ENCODE measurements at regions of chr1 and their contacts with region 1.

Region 1: DNA sequence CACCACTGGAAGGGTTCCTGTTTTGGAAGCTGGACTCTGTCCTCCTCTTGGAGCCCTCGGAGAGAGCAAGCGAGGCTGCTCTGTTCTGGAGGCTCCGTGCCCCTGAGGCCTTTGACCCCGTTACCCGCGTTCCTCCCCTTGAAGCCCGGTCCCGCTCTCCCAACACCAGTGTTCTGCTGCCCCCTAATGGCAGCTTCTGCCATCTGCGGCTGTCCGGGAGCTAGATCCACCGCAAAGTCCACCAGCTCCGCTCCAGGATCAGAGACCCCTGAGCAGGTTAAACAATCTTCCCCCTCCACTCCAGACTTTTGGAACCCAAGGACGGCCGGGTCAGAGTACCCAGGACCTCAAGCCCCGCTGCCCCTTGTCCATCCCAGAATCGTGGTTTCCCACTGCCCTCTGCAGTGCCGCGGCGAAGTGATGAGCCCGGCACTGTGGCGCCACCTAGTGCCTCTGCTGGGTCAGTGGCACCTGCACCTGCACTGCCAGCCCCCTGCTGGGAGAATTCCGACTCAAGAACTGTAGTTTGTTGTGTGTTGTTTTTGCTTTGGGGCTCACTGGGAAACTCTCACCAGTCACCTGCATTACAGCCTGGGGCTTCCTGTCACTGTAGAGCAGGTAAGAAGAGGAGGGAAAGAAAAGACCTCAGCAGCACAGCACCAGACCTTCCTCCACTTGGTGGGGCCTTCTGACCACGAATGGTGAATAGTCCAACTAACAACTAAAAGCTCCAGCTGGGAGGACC is 63.5 kb upstream of the NFASC start:
- DNase-seq: peak; percentile 78
- ATAC-seq: peak; percentile 95
- H3K4me3 Mint-ChIP-seq: peak overlapping the region; percentile 93
- H3K27ac Mint-ChIP-seq: no peak overlapping the region
- H3K4me1 Mint-ChIP-seq: peaks cover 18% of the 10 kb centered on the region
- H3K27me3 Mint-ChIP-seq: peaks cover 3% of the 10 kb centered on the region
- CTCF ChIP-seq: peak; percentile 100

Region 2: DNA sequence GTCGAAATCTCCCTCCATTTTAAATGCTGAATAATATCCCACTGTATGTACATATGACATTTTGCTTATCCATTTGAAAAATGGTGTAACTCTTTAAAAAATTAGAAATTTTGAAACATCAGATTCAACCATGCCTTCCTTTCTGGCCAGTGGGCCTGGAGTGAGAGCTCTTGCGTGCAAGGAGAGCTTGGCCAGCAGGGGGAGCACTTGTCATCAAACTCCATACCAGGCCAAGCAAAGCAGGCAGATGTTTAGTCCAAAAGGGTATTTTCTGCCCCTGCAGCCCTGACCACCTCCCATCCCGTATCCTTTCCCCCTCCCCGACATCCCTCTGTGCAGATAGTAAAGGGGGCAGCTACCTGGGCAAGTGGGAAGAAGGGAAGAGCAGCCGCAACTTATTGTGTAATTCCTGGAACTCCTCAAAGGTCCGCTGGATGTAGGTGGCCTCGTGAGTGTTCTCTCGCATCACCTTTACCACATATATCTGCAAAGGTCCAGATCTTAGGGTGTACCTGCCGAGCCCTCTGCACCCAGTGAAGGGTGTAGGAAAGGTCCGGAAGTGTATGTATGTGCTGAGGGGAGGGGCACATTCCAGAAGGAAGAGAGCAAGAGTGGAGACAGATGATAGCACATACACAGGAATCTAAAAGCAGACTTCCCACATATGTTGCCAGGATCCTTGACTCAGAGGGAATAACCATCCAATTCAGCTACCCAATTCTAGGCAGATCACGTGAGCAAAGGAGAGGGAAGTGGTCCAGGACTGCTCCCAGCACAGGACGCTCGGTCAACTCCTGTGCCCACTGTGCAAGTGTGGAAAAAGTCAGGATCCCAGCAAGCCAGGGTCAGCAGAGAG is 375.6 kb before region 1 on chr1:
- CTCF ChIA-PET with region 1: interaction called, 7 read pairs
- POLR2A ChIA-PET with region 1: no interaction called
- intact Hi-C with region 1: loop called (anchors 1 kb)
- DNase-seq: peak; percentile 70
- ATAC-seq: peak; percentile 87
- H3K4me3 Mint-ChIP-seq: no peak overlapping the region
- H3K27ac Mint-ChIP-seq: peak overlapping the region; percentile 41
- H3K4me1 Mint-ChIP-seq: peaks cover 5% of the 10 kb centered on the region
- H3K27me3 Mint-ChIP-seq: no peaks in the 10 kb centered on the region
- CTCF ChIP-seq: peak; percentile 40

Region 3: DNA sequence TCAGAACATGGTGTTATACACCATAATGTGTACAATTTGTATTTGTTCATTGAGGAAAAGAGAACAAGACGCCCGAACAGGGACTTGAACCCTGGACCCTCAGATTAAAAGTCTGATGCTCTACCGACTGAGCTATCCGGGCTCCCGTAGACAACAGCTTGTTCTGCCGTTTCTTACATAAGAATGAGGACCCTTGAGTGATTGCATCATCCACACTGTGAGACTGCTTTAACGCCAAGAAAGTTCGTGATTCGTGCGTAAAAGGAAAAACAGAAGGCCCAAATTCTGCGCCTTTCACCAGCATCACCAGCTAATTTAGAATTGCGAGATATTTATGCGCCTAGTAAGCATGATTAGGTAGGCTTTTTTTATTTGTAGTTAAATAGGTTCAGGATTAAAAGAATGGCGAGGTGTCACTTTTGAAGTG is 300.1 kb before region 1 on chr1:
- CTCF ChIA-PET with region 1: interaction called, 14 read pairs
- POLR2A ChIA-PET with region 1: no interaction called
- intact Hi-C with region 1: loop called (anchors 2 kb)
- DNase-seq: peak; percentile 66
- ATAC-seq: peak; percentile 62
- H3K4me3 Mint-ChIP-seq: peak overlapping the region; percentile 91
- H3K27ac Mint-ChIP-seq: peak overlapping the region; percentile 99
- H3K4me1 Mint-ChIP-seq: peaks cover 74% of the 10 kb centered on the region
- H3K27me3 Mint-ChIP-seq: peaks cover 5% of the 10 kb centered on the region
- CTCF ChIP-seq: no peak

Region 4: GRCh38 chr1:204578867-204579664 is 228.0 kb before region 1 on chr1:
- CTCF ChIA-PET with region 1: interaction called, 11 read pairs
- POLR2A ChIA-PET with region 1: no interaction called
- intact Hi-C with region 1: no loop called
- DNase-seq: no peak
- ATAC-seq: peak; percentile 76
- H3K4me3 Mint-ChIP-seq: peak overlapping the region; percentile 88
- H3K27ac Mint-ChIP-seq: peak overlapping the region; percentile 95
- H3K4me1 Mint-ChIP-seq: peaks cover 55% of the 10 kb centered on the region
- H3K27me3 Mint-ChIP-seq: no peaks in the 10 kb centered on the region
- CTCF ChIP-seq: no peak

Region 5: DNA sequence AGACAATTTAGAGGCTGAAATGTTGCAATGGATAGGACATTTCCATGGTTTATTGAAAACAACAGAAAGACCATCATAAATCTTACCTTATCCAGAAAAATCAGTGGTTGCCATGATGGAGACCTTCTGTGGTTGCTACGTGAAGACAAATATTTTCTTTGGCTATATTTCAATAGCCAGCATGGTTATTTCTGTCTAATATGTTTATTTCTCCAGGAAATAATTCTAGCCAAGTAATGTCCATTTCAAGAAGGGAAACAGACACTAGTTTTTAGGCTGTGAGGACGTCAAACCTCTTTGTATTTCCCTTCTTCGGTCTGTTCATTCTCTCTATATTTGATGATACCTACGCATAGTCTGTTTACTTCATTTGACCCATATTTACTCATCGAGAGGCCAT is 14.4 kb after region 1 on chr1:
- CTCF ChIA-PET with region 1: interaction called, 10 read pairs
- POLR2A ChIA-PET with region 1: no interaction called
- intact Hi-C with region 1: no loop called
- DNase-seq: no peak
- ATAC-seq: no peak
- H3K4me3 Mint-ChIP-seq: no peak overlapping the region
- H3K27ac Mint-ChIP-seq: no peak overlapping the region
- H3K4me1 Mint-ChIP-seq: no peaks in the 10 kb centered on the region
- H3K27me3 Mint-ChIP-seq: peaks cover 26% of the 10 kb centered on the region
- CTCF ChIP-seq: no peak

Region 6: GRCh38 chr1:204924013-204924967 is 117.2 kb after region 1 on chr1:
- CTCF ChIA-PET with region 1: no interaction called
- POLR2A ChIA-PET with region 1: no interaction called
- intact Hi-C with region 1: no loop called
- DNase-seq: no peak
- ATAC-seq: no peak
- H3K4me3 Mint-ChIP-seq: no peak overlapping the region
- H3K27ac Mint-ChIP-seq: no peak overlapping the region
- H3K4me1 Mint-ChIP-seq: no peaks in the 10 kb centered on the region
- H3K27me3 Mint-ChIP-seq: peaks cover 8% of the 10 kb centered on the region
- CTCF ChIP-seq: no peak

Region 7: GRCh38 chr1:205255941-205256780 is 449.0 kb after region 1 on chr1:
- CTCF ChIA-PET with region 1: interaction called, 5 read pairs
- POLR2A ChIA-PET with region 1: no interaction called
- intact Hi-C with region 1: loop called (anchors 5 kb)
- DNase-seq: peak; percentile 74
- ATAC-seq: peak; percentile 99
- H3K4me3 Mint-ChIP-seq: no peak overlapping the region
- H3K27ac Mint-ChIP-seq: no peak overlapping the region
- H3K4me1 Mint-ChIP-seq: no peaks in the 10 kb centered on the region
- H3K27me3 Mint-ChIP-seq: peaks cover 3% of the 10 kb centered on the region
- CTCF ChIP-seq: peak; percentile 98

Region 8: GRCh38 chr1:205512059-205513045 is 705.2 kb after region 1 on chr1:
- CTCF ChIA-PET with region 1: no interaction called
- POLR2A ChIA-PET with region 1: no interaction called
- intact Hi-C with region 1: no loop called
- DNase-seq: no peak
- ATAC-seq: no peak
- H3K4me3 Mint-ChIP-seq: no peak overlapping the region
- H3K27ac Mint-ChIP-seq: no peak overlapping the region
- H3K4me1 Mint-ChIP-seq: peaks cover 5% of the 10 kb centered on the region
- H3K27me3 Mint-ChIP-seq: no peaks in the 10 kb centered on the region
- CTCF ChIP-seq: no peak